ENCODE measurements at regions of chr5 and their contacts with region 1.

Region 1: DNA sequence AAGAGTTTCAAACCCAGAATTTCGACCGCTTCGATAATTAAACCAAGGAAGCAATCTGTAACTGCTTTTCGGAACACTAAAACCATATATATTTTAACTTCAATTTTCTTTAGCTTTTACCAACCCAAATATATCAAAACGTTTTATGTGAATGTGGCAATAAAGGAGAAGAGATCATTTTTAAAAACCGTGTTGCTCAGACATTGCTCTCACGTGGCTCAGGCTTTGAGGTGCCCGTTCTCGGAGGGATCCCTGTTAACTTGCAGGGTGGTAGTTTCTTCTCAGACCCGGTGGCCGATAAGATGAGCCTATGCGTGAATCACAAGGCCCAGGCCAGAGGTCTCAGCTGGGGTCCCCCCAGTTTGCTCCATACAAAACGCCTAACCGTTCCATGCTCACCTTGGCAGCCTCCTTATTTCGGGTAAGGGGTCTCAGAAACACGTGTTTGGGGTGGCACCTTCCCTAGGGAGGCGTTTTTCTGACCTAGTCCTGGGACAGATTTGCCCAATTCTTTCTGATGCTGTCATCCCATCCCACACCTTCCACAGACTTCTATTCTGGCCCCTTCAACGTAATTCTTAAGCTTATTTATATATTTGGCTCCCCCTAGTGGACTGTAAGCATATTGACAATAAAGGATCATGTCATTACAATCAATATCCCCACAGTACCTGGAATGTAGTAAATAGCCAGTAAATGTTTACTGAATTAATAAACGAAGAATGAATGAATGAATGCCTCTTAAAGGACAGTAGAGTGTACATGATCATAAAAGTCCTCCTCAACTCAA is 48.1 kb downstream of the THBS4 start:
- ATAC-seq: peak; percentile 67 to 84 (median 72)
- H3K4me3 ChIP-seq: no peak overlapping the region
- H3K27ac ChIP-seq: no peak overlapping the region
- H3K4me1 ChIP-seq: peaks cover 0 to 3% of the 10 kb centered on the region in 2 donors

Region 2: DNA sequence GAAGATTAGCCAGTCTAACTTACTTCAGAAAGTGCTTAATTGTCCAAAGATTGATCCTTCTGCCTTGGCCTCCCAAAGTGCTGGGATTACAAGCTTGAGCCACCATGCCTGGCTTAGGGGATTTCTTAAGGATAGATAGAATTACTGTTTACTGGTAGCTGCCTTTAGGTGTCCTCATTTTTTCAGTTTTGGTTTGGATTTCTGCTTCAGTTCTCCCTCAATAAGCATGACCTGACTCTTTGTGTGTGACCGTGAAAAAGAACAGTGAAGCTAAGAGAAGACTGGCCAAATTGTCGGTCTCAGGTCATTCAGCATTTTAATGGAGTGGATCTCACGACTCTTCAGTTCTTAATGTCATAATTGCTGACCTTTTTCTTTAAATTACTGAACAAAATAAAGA is 416.5 kb before region 1 on chr5:
- in situ Hi-C with region 1: no loop called
- ATAC-seq: no peak
- H3K4me3 ChIP-seq: no peak overlapping the region
- H3K27ac ChIP-seq: no peak overlapping the region
- H3K4me1 ChIP-seq: no peaks in the 10 kb centered on the region

Region 3: GRCh38 chr5:79878721-79879336 is 204.5 kb before region 1 on chr5:
- in situ Hi-C with region 1: loop called in 2 of 9 experiments (anchors 10 to 25 kb)
- ATAC-seq: peak in 3 of 8 experiments; percentile 71 to 78 (median 78)
- H3K4me3 ChIP-seq: no peak overlapping the region
- H3K27ac ChIP-seq: no peak overlapping the region
- H3K4me1 ChIP-seq: no peaks in the 10 kb centered on the region

Region 4: DNA sequence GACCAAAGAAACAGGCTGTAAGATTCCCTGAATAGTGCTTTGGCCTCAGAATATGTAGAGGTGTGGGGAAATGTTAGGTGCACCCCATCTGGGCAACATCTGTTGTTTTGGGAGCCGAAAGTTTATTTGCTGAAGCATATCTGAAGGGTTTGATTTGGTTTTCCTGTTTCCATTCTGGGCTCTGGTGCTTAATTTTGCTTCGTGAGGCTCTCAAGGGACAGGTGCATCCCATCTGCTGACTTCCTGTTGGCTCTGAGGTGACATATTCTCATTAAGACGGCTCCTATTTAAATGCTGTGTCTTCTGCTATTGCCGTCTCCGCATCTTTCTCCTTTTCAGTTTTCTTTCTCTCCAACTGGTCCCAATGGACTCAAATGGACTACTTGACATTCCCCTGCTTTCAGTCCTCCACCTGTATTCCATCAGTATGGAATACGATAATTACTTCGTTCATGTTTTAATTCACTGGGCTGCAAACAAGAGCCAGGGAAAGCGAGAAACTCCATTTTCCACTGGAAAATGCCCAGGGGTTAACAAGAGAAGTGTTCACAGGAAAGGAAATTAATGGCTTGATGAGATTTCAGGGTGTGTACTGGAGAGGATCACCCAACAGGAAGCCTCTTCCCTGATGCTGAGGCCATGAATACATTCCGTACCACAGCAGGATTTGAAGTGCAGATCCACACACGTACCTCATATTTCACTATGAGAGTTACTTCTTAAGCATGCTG is 196.2 kb before region 1 on chr5:
- in situ Hi-C with region 1: loop called in 2 of 9 experiments (anchors 10 to 25 kb)
- ATAC-seq: peak in 1 of 8 experiments; percentile 6
- H3K4me3 ChIP-seq: no peak overlapping the region
- H3K27ac ChIP-seq: no peak overlapping the region
- H3K4me1 ChIP-seq: no peaks in the 10 kb centered on the region

Region 5: GRCh38 chr5:80255732-80256479 is 172.6 kb after region 1 on chr5 and contains the start of gene SERINC5:
- in situ Hi-C with region 1: loop called in 1 of 9 experiments (anchors 25 kb)
- ATAC-seq: peak; percentile 67 to 84 (median 80)
- H3K4me3 ChIP-seq: peak within 1 kb of the TSS; percentile 58 to 75 (median 64)
- H3K27ac ChIP-seq: peak within 1 kb of the TSS; percentile 71 to 86
- H3K4me1 ChIP-seq: peaks cover 12 to 25% of the 10 kb centered on the region in 2 donors
- total RNA-seq, gene SERINC5: 6.5 to 16.5 (median 8.1) TPM

Region 6: DNA sequence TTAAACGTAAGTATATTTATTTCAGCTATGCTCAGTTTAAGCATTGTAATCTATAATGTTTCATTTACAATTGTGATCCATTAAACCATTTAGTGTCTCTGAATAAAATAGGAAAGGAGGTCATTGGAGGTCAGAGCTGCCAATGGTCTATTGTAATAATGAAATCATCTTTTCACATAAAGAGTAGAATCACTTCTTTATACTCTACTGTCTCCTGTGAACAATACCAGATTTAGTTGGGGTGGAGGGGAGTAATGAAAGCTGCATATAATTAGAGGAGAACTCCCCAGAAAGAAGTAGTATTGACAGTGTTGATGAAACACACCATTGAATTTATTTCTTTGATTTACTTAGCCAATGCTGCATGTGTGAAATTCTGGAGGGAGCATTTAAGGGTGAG is 289.5 kb after region 1 on chr5:
- in situ Hi-C with region 1: no loop called
- ATAC-seq: no peak
- H3K4me3 ChIP-seq: no peak overlapping the region
- H3K27ac ChIP-seq: no peak overlapping the region
- H3K4me1 ChIP-seq: peaks cover 0 to 6% of the 10 kb centered on the region in 2 donors

Region 7: GRCh38 chr5:80793354-80793753 is 710.1 kb after region 1 on chr5:
- in situ Hi-C with region 1: no loop called
- ATAC-seq: no peak
- H3K4me3 ChIP-seq: no peak overlapping the region
- H3K27ac ChIP-seq: no peak overlapping the region
- H3K4me1 ChIP-seq: no peaks in the 10 kb centered on the region

Measured in motor neuron (in vitro differentiated cells).